ENCODE measurements at regions of chr5 and their contacts with region 1.

Region 1: GRCh38 chr5:58460732-58461286 is 923 bp upstream of the PLK2 start:
- DNase-seq: peak; percentile 95
- H3K4me3 Mint-ChIP-seq: peak overlapping the region; percentile 78
- H3K27ac Mint-ChIP-seq: peak overlapping the region; percentile 81
- H3K4me1 Mint-ChIP-seq: peaks cover 15% of the 10 kb centered on the region
- H3K27me3 Mint-ChIP-seq: peaks cover 13% of the 10 kb centered on the region

Region 2: DNA sequence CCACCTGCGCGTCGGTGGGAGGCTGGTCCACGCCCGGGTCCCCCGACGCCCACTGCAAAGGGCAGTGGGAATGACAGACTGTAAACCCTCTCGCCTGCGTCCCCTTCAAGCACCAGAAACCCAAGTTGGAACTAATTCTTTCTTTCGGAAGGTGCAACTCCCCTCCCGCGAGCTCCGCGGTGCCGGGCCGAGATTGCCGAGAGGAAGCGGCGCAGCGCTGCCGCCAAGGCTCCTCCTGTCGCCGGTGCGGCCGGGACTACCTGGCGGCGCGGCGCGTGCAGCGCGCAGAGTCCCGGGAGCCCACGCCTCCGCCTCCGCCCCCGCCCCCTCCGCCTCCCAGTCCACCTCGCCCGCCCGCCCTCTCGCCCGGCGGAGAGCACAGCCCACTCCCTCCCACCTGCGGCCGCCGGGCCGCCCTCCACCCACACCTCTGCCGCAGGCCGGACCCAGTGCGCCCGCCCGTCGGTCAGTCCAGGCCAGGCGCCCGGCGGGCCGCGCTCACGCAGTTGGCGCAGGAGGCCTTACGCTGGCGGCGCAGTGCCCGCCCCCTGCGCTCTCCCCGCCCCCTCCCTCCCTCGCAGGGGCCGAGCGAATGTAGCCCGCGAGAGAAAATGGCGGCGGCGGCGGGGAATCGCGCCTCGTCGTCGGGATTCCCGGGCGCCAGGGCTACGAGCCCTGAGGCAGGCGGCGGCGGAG is 1645.7 kb before region 1 on chr5 and contains the start of gene MAP3K1:
- CTCF ChIA-PET with region 1: no interaction called
- intact Hi-C with region 1: loop called (anchors 5 kb)
- DNase-seq: peak; percentile 74
- H3K4me3 Mint-ChIP-seq: peak within 1 kb of the TSS; percentile 88
- H3K27ac Mint-ChIP-seq: peak within 1 kb of the TSS; percentile 87
- H3K4me1 Mint-ChIP-seq: peaks cover 34% of the 10 kb centered on the region
- H3K27me3 Mint-ChIP-seq: no peaks in the 10 kb centered on the region
- total RNA-seq, gene MAP3K1: 18.2 to 19.2 TPM

Region 3: DNA sequence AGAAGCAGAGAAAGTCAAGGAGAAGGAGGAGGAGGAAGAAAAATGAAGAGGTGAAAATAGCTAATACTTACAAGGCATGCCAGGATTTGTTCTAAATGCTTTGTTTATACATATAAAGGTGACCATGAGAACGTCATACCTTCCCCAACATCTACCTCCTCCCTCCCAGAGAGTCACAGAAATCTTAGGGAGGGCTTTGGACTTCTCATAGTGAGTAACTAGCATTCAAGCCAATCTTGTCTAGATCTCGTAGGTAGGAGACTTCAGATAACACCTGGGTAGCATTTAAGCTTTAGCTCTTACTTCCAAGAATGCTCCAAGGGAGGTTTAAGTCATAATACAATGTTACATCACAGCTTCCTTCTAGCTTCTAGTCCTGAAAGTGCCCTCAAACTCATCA is 1323.4 kb before region 1 on chr5:
- CTCF ChIA-PET with region 1: no interaction called
- intact Hi-C with region 1: loop called (anchors 10 kb)
- DNase-seq: no peak
- H3K4me3 Mint-ChIP-seq: no peak overlapping the region
- H3K27ac Mint-ChIP-seq: no peak overlapping the region
- H3K4me1 Mint-ChIP-seq: no peaks in the 10 kb centered on the region
- H3K27me3 Mint-ChIP-seq: no peaks in the 10 kb centered on the region

Region 4: DNA sequence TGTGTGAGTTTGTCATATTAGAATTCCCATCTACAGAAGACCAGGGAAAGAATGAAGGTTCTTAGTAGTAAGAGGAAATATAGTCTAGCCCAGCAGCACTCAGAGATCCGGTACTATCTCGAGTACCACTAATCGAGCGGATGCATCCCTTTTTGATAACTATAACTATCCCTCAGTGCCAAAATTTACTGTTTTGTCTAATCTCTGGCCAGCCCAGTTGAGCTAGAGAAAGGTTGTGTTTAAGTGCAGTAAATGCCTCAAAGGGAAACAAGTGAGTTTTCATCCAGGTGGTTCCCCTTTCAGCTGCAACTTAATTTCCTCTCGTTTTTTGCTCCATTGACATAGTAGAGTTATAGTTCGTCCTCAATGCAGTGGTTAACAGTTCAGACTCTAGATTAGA is 1140.2 kb before region 1 on chr5:
- CTCF ChIA-PET with region 1: interaction called, 5 read pairs
- intact Hi-C with region 1: loop called (anchors 1 kb)
- DNase-seq: no peak
- H3K4me3 Mint-ChIP-seq: no peak overlapping the region
- H3K27ac Mint-ChIP-seq: no peak overlapping the region
- H3K4me1 Mint-ChIP-seq: peaks cover 15% of the 10 kb centered on the region
- H3K27me3 Mint-ChIP-seq: no peaks in the 10 kb centered on the region

Region 5: DNA sequence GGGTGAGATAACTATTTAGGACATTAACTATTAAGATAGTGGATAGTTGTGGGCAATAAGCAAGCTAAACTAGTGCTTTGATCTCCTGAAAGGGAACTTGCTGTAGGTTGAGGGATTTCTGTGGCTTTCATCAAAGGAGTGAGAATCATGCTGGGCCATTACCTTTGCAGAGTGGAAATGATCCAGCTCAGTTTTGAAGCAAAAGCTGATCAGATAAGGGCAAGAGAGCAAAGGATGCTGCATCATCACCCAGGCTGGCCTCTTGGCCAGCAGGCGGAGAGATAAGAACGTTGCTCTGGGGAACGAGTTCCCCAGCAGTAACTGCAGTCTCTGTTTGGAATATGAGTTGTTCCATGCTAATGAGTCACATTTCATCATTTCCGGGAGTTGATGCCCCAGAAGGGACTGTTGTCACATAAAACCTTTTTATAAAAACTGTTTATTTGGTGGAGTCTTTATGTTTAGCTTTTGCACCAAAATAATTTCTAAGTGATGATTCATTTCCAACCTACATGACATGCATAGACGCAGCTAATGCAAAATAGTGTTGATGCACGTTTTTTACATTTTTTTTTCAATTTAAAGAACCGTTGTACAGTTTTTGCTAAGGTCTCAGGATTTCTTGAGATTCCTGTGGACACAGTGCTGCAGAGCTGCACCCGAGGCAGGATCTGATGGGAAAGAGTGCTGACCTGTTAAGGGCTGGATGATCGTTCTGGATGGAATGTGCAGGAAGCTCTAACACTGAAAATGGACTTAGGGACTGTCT is 1077.5 kb before region 1 on chr5:
- CTCF ChIA-PET with region 1: no interaction called
- intact Hi-C with region 1: loop called (anchors 5 kb)
- DNase-seq: peak; percentile 55
- H3K4me3 Mint-ChIP-seq: no peak overlapping the region
- H3K27ac Mint-ChIP-seq: peak overlapping the region; percentile 6
- H3K4me1 Mint-ChIP-seq: peaks cover 10% of the 10 kb centered on the region
- H3K27me3 Mint-ChIP-seq: peaks cover 1% of the 10 kb centered on the region

Region 6: GRCh38 chr5:57779383-57780223 is 681.2 kb before region 1 on chr5:
- CTCF ChIA-PET with region 1: interaction called, 52 read pairs
- intact Hi-C with region 1: loop called (anchors 1 kb)
- DNase-seq: peak; percentile 52
- H3K4me3 Mint-ChIP-seq: no peak overlapping the region
- H3K27ac Mint-ChIP-seq: no peak overlapping the region
- H3K4me1 Mint-ChIP-seq: no peaks in the 10 kb centered on the region
- H3K27me3 Mint-ChIP-seq: peaks cover 6% of the 10 kb centered on the region

Region 7: GRCh38 chr5:58273711-58274110 is 187.1 kb before region 1 on chr5:
- CTCF ChIA-PET with region 1: no interaction called
- intact Hi-C with region 1: loop called (anchors 10 kb)
- DNase-seq: no peak
- H3K4me3 Mint-ChIP-seq: no peak overlapping the region
- H3K27ac Mint-ChIP-seq: no peak overlapping the region
- H3K4me1 Mint-ChIP-seq: no peaks in the 10 kb centered on the region
- H3K27me3 Mint-ChIP-seq: peaks cover 21% of the 10 kb centered on the region

Region 8: GRCh38 chr5:58410441-58410840 is 50.4 kb before region 1 on chr5:
- CTCF ChIA-PET with region 1: no interaction called
- intact Hi-C with region 1: no loop called
- DNase-seq: no peak
- H3K4me3 Mint-ChIP-seq: no peak overlapping the region
- H3K27ac Mint-ChIP-seq: no peak overlapping the region
- H3K4me1 Mint-ChIP-seq: no peaks in the 10 kb centered on the region
- H3K27me3 Mint-ChIP-seq: peaks cover 11% of the 10 kb centered on the region